ENCODE measurements at regions of chr6 and their contacts with region 1.

Region 1: GRCh38 chr6:163347021-163347446 is 67.5 kb upstream of the QKI start:
- DNase-seq: no peak
- ATAC-seq: peak; percentile 20 to 44

Region 2: GRCh38 chr6:163392533-163392932 is 45.5 kb after region 1 on chr6:
- intact Hi-C with region 1: loop called in 1 of 2 experiments (anchors 5 kb)
- DNase-seq: peak; percentile 74
- ATAC-seq: peak; percentile 84 to 87

Measured in left cardiac atrium (tissue), 4 donors.